A673 (cell line): ENCODE measurements at regions of chr3 and their contacts with region 1.

Region 1: DNA sequence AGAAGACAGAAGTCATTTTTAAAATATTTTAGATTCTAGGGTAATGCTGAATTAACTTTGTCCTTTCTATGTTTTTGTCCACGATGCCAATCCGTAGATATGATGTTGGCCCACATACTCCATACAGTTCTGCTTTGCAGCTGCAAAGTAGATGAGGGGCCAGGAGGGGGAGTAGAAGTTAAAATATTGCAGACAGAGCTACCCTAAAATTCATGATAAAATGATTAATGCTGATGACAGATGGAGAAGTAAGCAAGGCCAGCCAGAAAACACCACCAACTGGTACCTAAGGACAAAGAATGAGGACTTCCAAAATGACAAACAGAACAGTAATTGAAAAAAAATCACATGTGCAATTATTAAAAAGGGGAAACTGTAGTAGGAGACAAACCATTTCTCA is 756.6 kb upstream of the ARPP21 start:
- DNase-seq: peak; percentile 80
- H3K4me3 ChIP-seq: no peak overlapping the region
- H3K27ac ChIP-seq: peak overlapping the region; percentile 6
- H3K4me1 ChIP-seq: peaks cover 41% of the 10 kb centered on the region
- H3K27me3 ChIP-seq: no peaks in the 10 kb centered on the region
- CTCF ChIP-seq: peak; percentile 82

Region 2: DNA sequence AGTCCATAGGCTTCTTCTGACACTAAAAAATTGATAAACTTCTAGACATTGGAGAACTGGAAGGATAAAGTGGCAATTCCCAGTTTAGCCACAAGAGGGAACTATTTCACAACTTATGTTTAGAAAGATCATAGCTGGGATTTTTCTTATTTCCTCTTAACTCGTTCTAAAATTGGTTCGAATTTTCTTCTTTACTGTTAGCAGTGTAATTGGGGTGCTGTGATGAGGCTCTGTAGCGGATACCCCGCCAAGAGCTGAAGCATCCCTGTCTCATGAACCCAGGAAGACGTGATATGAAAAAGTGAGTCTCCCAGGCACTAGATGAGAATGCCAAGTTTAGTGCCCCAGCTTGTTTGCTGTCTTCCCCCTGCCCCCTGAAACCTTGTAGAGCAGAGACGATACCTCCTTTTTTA is 999.2 kb before region 1 on chr3:
- CTCF ChIA-PET with region 1: no interaction called
- POLR2A ChIA-PET with region 1: no interaction called
- intact Hi-C with region 1: loop called (anchors 2 kb)
- DNase-seq: peak; percentile 85
- H3K4me3 ChIP-seq: peak overlapping the region; percentile 15
- H3K27ac ChIP-seq: peak overlapping the region; percentile 81
- H3K4me1 ChIP-seq: peaks cover 29% of the 10 kb centered on the region
- H3K27me3 ChIP-seq: no peaks in the 10 kb centered on the region
- CTCF ChIP-seq: peak; percentile 87

Region 3: GRCh38 chr3:34998905-34999304 is 116.1 kb after region 1 on chr3:
- CTCF ChIA-PET with region 1: no interaction called
- POLR2A ChIA-PET with region 1: no interaction called
- intact Hi-C with region 1: loop called (anchors 10 kb)
- DNase-seq: peak; percentile 94
- H3K4me3 ChIP-seq: no peak overlapping the region
- H3K27ac ChIP-seq: peak overlapping the region; percentile 97
- H3K4me1 ChIP-seq: peaks cover 76% of the 10 kb centered on the region
- H3K27me3 ChIP-seq: no peaks in the 10 kb centered on the region
- CTCF ChIP-seq: no peak

Region 4: DNA sequence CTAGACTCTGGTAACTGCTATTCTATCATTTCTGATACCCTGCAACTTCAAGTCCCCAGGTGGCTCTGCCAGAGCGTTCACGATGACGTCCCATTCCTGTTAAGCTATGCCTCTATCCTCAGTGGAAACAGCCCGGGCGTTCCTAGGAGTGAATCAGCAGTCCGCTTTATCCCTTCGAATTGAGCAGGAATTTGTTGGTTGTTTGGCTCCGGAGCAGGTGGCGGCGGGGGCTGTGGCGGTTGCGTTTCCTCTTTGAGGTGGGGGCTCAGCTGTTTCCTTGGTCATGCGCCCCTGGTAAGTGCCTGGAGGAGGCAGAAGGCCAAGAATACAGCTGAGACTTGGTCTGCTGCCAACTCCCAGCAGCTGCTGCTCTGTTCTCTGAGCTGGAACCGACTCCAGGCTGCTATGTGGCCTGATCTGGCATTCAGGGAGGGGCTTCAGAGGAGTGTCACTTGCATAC is 781.7 kb after region 1 on chr3:
- CTCF ChIA-PET with region 1: no interaction called
- POLR2A ChIA-PET with region 1: no interaction called
- intact Hi-C with region 1: loop called (anchors 10 kb)
- DNase-seq: peak; percentile 86
- H3K4me3 ChIP-seq: peak overlapping the region; percentile 34
- H3K27ac ChIP-seq: no peak overlapping the region
- H3K4me1 ChIP-seq: peaks cover 30% of the 10 kb centered on the region
- H3K27me3 ChIP-seq: no peaks in the 10 kb centered on the region
- CTCF ChIP-seq: no peak

Region 5: DNA sequence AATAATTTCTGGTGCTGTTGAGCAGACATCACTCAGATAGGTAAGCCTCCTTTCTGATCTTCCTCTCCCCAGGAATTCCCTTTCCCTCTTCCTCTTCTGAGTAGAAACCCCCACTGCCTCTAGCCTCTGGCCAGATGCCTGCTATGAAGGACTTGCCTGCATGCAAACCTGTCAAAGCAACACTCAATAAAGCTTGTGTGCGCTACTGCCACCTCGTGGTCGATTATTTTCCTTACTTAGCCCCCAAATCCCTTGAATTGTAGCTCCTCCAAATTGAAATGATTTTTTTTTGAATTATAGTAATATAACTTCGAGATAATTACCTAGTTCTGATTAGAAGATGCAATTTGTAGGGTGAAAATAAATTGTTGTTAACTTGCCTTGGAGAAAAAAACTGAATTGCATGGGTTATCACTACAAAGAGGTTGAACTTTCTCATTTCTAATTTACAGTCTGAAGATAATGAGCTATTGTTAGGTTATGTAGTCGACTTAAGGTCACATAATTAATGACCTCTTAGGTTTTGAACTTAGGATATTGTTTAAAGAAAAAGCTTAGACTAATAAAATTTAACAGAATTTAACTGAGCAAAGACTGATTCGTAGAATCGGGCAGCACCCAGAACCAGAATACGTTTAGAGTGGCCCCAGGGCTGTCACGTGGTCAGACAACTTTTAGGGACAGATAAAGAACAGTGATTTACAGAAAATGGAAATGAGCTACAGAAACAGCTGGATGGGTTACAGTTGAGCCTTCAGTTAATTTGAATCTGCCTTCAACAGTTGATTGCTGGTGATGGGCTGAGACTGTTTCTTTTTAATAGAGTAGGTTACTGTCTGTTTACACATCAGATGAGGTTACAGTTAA is 1025.8 kb after region 1 on chr3:
- CTCF ChIA-PET with region 1: interaction called, 6 read pairs
- POLR2A ChIA-PET with region 1: no interaction called
- intact Hi-C with region 1: loop called (anchors 5 kb)
- DNase-seq: peak; percentile 83
- H3K4me3 ChIP-seq: no peak overlapping the region
- H3K27ac ChIP-seq: no peak overlapping the region
- H3K4me1 ChIP-seq: no peaks in the 10 kb centered on the region
- H3K27me3 ChIP-seq: no peaks in the 10 kb centered on the region
- CTCF ChIP-seq: peak; percentile 87

Region 6: DNA sequence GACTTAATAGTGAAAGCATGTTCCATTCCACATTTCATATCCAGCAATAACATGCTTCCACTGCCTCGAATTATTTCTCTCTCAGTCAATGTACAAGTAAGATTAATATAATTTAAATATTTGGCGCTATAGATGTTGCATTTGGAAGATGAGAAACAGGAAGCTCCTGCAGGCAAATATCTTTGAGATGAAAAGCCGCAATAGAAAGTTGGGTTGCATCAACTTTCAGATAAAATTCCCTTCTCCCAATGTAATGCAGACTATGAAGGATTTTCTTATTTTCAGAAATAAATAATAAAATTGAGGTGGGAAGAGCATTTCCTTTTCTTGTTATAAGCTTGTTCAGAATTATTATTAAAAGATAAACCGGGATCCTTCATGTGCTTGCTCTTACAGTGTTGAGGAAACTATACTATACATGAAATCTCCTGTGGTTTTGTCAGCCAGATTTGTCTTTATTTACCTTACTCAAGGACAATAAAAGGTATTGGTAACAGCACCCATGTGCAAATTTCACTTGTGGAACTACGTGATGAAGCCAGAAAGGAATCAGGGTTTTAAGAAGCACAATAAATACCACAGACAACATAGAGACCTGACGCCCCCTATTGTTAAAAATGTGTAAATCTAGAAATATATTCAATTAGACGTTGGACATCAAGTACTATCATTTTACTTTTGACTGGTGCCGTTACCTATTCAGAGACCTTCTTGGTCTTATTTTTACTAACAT is 1063.5 kb after region 1 on chr3:
- CTCF ChIA-PET with region 1: no interaction called
- POLR2A ChIA-PET with region 1: no interaction called
- intact Hi-C with region 1: loop called (anchors 5 kb)
- DNase-seq: peak; percentile 79
- H3K4me3 ChIP-seq: peak overlapping the region; percentile 17
- H3K27ac ChIP-seq: peak overlapping the region; percentile 68
- H3K4me1 ChIP-seq: peaks cover 23% of the 10 kb centered on the region
- H3K27me3 ChIP-seq: no peaks in the 10 kb centered on the region
- CTCF ChIP-seq: peak; percentile 73